Dorsolateral prefrontal cortex (tissue), 120 donors: ENCODE measurements at regions of chr3 and their contacts with region 1.

Region 1: GRCh38 chr3:71064288-71064955 is 519.1 kb downstream of the FOXP1 start:
- DNase-seq: peak in 2 of 10 donors; percentile 31 to 65
- H3K4me3 ChIP-seq: peak overlapping the region; percentile 44 to 85 (median 74)
- H3K27ac ChIP-seq: peak overlapping the region; percentile 48 to 96 (median 87)
- H3K27me3 ChIP-seq: no peaks in the 10 kb centered on the region
- CTCF ChIP-seq: peak in 1 of 56 donors; percentile 19

Region 2: GRCh38 chr3:69770219-69770618 is 1294.2 kb before region 1 on chr3:
- intact Hi-C with region 1: no loop called
- DNase-seq: no peak
- H3K4me3 ChIP-seq: no peak overlapping the region
- H3K27ac ChIP-seq: no peak overlapping the region
- H3K27me3 ChIP-seq: no peaks in the 10 kb centered on the region
- CTCF ChIP-seq: no peak

Region 3: GRCh38 chr3:71117572-71118247 is 53.3 kb after region 1 on chr3:
- intact Hi-C with region 1: no loop called
- DNase-seq: no peak
- H3K4me3 ChIP-seq: no peak overlapping the region
- H3K27ac ChIP-seq: peak overlapping the region in 5 of 59 donors; percentile 6 to 55 (median 11)
- H3K27me3 ChIP-seq: no peaks in the 10 kb centered on the region
- CTCF ChIP-seq: no peak

Region 4: DNA sequence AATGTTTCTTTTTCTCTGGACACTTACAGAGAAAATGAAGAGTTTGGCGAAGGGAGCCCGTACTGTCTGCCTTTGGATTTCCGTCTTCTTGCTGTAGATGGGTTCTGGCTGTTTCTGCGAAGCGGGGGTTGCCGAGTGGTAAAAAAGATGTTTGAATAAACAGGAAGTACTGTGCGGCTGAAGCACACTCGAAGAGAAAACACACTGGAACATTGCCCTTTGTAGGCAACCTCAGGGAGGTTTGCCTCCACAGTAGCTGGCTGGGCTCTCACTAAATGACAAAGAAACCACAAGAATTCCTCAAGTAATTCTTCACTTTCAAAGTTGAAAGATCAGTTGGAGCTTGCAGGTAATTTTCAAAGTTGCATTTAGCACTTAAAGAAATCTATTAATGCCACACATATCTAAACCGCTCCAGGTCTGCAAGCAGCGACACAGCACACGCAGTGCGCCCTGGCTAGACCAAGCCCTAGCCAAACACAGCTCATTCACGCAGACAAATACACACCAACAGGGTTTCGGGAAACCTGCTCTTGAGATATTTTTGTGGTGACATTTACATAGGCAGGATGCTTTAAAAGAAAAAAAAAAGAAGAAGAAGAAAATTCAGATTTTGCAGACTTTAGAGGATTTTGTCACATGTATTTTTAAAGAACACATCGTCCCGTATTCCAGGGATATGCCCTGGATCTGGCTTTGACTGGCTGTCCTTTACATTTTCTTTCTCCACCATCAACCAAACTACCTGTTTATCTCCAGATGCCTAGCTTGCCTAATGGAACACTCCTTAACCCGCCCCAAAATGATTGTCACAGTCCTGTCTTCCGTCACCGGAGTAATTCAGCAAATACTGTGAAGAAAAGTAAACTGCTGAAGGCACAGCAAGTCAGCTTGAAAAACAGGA is 66.3 kb after region 1 on chr3:
- intact Hi-C with region 1: loop called in 1 of 2 experiments (anchors 5 kb)
- DNase-seq: peak in 7 of 10 donors; percentile 22 to 66 (median 49)
- H3K4me3 ChIP-seq: peak overlapping the region; percentile 30 to 75 (median 60)
- H3K27ac ChIP-seq: peak overlapping the region in 58 of 59 donors; percentile 22 to 93 (median 82)
- H3K27me3 ChIP-seq: no peaks in the 10 kb centered on the region
- CTCF ChIP-seq: peak in 1 of 56 donors; percentile 10

Region 5: DNA sequence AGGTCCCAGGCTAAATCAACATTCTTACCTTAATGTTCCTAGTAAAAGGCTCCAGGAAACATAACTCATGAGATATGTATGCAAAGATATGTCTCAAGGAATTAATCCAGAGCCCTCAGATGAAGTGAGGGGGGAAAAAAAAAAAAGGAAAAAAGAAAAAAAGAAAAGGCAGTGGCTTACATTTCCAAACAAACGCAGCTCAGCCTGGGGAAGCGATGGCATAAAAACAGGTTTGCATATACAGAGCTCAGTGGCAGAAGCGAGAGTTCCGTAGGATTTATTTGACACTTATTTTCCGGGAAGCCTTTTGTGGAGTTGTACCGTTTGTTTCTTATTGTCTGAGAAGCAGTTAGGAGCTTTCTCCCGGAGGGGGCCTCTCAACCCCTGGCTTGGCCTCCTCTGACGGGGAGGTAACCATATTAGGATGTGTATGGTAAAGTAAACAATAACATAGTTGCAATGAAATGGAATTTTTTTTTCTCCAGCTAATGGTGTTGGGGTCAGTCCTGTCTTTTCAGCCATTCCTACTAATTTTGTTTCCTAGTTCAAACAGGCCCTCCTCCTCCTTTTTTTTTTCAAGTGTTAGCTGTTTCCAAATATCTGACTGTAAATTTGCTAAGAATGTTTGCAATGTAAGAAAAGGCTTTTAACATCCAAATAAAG is 180.5 kb after region 1 on chr3:
- intact Hi-C with region 1: no loop called
- DNase-seq: no peak
- H3K4me3 ChIP-seq: peak overlapping the region in 29 of 59 donors; percentile 2 to 41 (median 20)
- H3K27ac ChIP-seq: peak overlapping the region in 13 of 59 donors; percentile 0 to 45 (median 32)
- H3K27me3 ChIP-seq: no peaks in the 10 kb centered on the region
- CTCF ChIP-seq: no peak

Region 6: GRCh38 chr3:71305231-71306206 is 241.1 kb after region 1 on chr3:
- intact Hi-C with region 1: loop called in 1 of 2 experiments (anchors 10 kb)
- DNase-seq: peak in 1 of 10 donors; percentile 44
- H3K4me3 ChIP-seq: peak overlapping the region; percentile 18 to 72 (median 54)
- H3K27ac ChIP-seq: peak overlapping the region; percentile 19 to 96 (median 87)
- H3K27me3 ChIP-seq: no peaks in the 10 kb centered on the region
- CTCF ChIP-seq: peak in 2 of 56 donors; percentile 3 to 12